ENCODE measurements at regions of chr2 and their contacts with region 1.

Region 1: DNA sequence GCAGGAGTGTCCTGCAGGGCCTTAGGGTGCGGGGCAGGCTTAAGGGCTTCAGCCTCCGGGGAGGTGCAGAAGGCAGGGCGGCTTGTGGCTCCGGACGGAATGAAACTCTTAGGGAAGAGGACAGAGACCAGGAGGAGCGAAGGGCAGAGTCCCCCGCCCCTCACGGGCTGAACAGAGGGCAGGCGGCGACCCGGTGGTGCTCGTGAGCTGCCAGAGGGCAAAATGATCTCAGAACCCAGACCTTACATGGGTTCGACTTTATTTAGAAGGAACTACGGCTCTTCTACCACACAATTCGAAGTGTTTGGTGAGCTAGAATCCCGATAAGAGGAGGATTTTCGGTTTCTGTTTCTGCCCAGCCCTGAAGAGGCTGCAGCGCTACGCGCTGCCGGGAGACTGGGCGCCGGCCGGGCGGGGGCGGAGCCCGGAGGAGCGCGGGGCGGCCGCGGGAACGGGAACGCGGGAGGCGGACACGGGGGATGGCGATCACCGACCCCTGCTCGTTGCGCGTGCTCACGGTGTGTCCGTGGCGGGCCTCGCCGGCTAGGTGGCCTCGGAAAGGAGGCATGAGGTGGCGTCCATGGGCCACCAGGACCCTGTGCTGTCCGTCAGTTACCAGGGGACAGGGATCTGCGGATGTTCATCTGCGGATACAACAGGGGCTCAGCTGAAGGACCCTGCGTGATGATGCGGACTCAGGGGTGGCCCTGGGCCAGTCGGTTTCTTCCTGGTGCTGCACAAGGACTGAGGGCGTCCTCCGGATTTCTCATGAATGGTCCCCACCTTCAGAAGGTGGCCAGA is 4.2 kb upstream of the SP100 start:
- DNase-seq: peak; percentile 64
- ATAC-seq: peak; percentile 86
- H3K4me3 ChIP-seq: peak overlapping the region; percentile 72
- H3K27ac ChIP-seq: peak overlapping the region; percentile 92
- H3K4me1 ChIP-seq: peaks cover 13% of the 10 kb centered on the region
- H3K27me3 ChIP-seq: no peaks in the 10 kb centered on the region
- CTCF ChIP-seq: no peak; the same call in 1 of the 2 replicates
- POLR2A ChIP-seq: peak; percentile 56; the same call in 1 of the 2 replicates
- RAD21 ChIP-seq: no peak

Region 2: GRCh38 chr2:230219419-230220331 is 192.1 kb before region 1 on chr2 and contains the start of gene SP110:
- CTCF ChIA-PET with region 1: no interaction called
- POLR2A ChIA-PET with region 1: no interaction called
- dilution Hi-C with region 1: no loop called
- in situ Hi-C with region 1: no loop called
- intact Hi-C with region 1: loop called (anchors 10 kb)
- DNase-seq: peak; percentile 80
- ATAC-seq: peak; percentile 93
- H3K4me3 ChIP-seq: peak within 1 kb of the TSS; percentile 94
- H3K27ac ChIP-seq: peak within 1 kb of the TSS; percentile 72
- H3K4me1 ChIP-seq: no peaks in the 10 kb centered on the region
- H3K27me3 ChIP-seq: no peaks in the 10 kb centered on the region
- CTCF ChIP-seq: no peak
- POLR2A ChIP-seq: no peak
- RAD21 ChIP-seq: peak; percentile 10; the same call in 1 of the 2 replicates
- total RNA-seq, gene SP110: 9.3 and 11.1 TPM in 2 replicates

Region 3: DNA sequence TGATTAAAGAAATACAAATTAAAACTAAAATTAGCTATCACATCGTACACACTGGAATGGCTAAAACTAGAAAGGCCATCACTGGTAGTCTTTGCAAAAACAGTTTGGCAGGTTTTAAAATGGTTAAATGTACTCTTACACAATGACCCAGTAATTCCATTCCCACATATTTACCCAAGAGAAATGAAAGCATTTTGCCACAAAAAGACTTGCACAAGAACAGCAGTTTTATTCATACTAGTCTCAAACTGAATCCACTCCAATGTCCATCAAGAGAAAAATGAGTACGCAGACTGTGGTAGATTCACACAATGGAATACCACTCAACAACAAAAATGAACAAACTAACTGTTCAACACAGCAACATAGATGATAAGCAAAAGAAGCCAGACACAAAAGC is 55.7 kb before region 1 on chr2:
- CTCF ChIA-PET with region 1: no interaction called
- POLR2A ChIA-PET with region 1: no interaction called
- dilution Hi-C with region 1: no loop called
- in situ Hi-C with region 1: no loop called
- intact Hi-C with region 1: no loop called
- DNase-seq: peak; percentile 36
- ATAC-seq: no peak; the same call in 1 of the 2 replicates
- H3K4me3 ChIP-seq: no peak overlapping the region
- H3K27ac ChIP-seq: no peak overlapping the region
- H3K4me1 ChIP-seq: no peaks in the 10 kb centered on the region
- H3K27me3 ChIP-seq: no peaks in the 10 kb centered on the region
- CTCF ChIP-seq: no peak
- POLR2A ChIP-seq: no peak
- RAD21 ChIP-seq: no peak

Region 4: DNA sequence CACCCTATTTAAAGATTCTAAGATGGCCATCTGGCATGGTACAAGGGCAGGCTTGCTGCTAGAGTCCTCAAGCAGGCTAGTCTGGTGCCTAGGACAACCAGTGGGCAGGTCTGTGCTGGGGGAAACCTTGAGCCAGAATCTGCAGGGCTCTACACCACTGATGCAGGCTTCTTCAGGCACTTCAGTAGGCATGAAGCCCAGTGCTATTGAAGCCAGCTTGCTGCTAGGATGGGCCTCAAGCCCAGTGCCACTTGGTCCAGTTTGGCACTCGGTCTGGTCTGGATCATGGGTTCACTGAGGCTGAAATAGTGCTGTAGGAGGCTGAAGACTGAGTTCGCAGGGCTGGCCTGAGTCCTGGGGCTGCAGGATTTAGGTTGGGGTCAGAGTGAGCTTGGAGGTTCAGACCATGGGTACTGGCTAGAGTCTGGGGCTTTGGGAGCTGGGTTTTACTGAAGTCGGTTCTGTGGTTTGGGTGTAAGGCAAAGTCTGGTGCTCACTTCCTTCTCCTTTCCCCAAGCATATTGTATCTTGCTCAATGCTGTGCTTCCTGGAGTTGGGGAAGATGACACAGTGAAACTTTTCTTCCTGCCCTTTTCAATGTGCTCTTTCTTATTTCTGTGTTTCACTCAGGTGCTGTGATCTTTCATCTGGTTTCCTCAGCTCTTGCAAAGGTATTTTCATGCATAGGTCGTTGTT is 45.5 kb after region 1 on chr2:
- CTCF ChIA-PET with region 1: no interaction called
- POLR2A ChIA-PET with region 1: no interaction called
- dilution Hi-C with region 1: no loop called
- in situ Hi-C with region 1: no loop called
- intact Hi-C with region 1: no loop called
- DNase-seq: no peak
- ATAC-seq: no peak
- H3K4me3 ChIP-seq: no peak overlapping the region
- H3K27ac ChIP-seq: no peak overlapping the region
- H3K4me1 ChIP-seq: no peaks in the 10 kb centered on the region
- H3K27me3 ChIP-seq: no peaks in the 10 kb centered on the region
- CTCF ChIP-seq: no peak
- POLR2A ChIP-seq: no peak
- RAD21 ChIP-seq: no peak

Region 5: DNA sequence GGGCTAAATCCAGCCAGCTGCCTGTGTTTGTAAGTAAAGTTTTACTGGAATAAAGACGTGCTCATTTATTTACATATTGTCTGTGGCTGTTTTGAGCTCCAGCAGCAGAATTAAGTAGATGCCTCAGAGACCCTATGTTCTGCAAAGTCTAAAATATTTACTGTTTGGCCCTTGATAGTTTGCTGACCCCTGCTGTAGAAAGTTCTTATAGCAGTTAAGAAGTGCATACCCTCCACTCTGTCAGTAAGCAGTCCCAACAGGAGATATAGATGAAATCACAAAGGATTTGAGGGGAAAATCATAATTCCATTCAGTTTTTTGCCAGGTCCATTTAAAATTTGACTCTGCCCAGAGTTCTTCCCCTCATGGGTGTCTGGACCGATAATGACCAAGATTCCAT is 402.8 kb after region 1 on chr2:
- CTCF ChIA-PET with region 1: no interaction called
- POLR2A ChIA-PET with region 1: no interaction called
- dilution Hi-C with region 1: no loop called
- in situ Hi-C with region 1: loop called (anchors 25 kb)
- intact Hi-C with region 1: loop called (anchors 5 kb)
- DNase-seq: peak; percentile 47
- ATAC-seq: peak; percentile 76
- H3K4me3 ChIP-seq: no peak overlapping the region
- H3K27ac ChIP-seq: no peak overlapping the region
- H3K4me1 ChIP-seq: peaks cover 6% of the 10 kb centered on the region
- H3K27me3 ChIP-seq: no peaks in the 10 kb centered on the region
- CTCF ChIP-seq: peak; percentile 54
- POLR2A ChIP-seq: no peak
- RAD21 ChIP-seq: peak; percentile 65

Measured in IMR-90 (cell line).